Endothelial cell of umbilical vein (primary cell): ENCODE measurements at regions of chr17 and their contacts with region 1.

Region 1: DNA sequence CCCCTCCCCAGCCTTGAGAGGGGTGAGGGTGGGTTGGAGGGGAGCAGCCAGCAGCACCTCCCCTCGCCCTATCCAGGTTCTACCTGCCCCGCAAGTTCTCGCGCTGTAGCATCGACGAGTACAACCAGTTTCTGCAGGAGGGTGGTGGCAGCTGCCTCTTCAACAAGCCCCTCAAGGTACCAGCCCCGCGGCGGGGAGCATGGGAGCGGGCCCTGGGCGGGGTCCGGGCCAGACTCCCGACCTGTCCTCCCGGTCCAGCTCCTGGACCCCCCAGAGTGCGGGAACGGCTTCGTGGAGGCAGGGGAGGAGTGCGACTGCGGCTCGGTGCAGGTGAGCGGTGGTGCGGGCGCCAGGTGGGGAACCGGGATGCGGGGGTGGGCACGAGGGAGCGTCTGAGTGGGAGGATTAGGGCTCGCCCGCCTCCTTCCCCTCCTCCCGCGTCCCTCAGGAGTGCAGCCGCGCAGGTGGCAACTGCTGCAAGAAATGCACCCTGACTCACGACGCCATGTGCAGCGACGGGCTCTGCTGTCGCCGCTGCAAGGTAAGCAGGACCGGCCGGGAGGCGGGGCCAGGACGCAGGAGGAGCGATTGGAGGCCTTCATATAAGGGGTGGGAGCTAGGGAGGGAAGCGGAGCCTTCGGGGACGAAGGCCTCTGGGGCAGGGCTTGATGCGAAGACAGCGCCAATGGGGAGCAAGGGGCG is 16.5 kb downstream of the ADAM11 start:
- DNase-seq: peak; percentile 98
- H3K4me3 ChIP-seq: peak overlapping the region; percentile 9 to 51 (median 20)
- H3K27ac ChIP-seq: no peak overlapping the region
- H3K4me1 ChIP-seq: peaks cover 5% of the 10 kb centered on the region
- H3K27me3 ChIP-seq: no peaks in the 10 kb centered on the region
- CTCF ChIP-seq: no peak
- POLR2A ChIP-seq: no peak

Region 2: DNA sequence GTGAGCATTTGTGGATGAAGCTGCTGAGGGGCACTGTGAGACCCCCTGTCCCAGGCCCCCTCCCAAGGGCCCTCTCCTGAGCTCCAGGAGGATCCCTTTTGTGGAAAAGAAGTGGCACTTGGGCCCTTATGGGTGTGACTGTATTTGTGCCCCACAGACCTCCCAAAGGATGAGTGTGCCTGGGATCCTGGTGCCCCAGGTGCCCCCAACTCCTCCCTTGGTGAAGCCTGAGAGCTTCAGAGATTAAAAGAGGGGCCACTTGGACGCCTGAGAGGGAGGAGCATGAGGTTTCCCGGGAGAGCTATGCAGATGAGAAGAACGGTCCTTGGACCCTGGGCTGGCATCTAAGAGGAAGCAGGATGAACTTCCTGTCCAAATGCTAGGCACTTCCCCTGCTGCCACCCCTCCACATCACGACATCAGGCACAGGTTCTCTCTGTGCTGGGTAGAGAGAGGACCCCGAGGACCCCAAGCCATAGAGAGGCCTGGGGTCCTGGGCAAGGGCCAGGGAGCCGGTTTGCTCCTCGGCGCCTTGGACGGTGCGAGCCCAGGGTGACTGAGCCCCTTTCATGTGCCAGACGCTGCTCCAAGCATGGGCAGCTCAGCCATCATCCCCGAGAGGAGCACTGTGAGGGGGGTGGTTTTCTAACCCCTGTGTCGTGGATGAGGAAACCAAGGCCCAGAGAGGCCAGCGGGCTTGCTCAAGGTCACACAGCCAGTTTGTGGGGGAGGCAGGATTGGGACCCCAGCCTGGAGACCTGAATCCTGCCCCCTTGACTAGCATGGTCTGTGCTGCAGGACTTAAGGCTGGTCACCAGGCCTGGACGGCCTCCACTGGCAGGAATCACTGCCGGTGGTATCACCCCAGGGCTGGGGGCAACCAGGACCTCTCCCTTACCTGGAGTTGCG is 22.1 kb before region 1 on chr17:
- CTCF ChIA-PET with region 1: no interaction called
- POLR2A ChIA-PET with region 1: no interaction called
- dilution Hi-C with region 1: no loop called
- intact Hi-C with region 1: no loop called
- DNase-seq: no peak
- H3K4me3 ChIP-seq: no peak overlapping the region
- H3K27ac ChIP-seq: no peak overlapping the region
- H3K4me1 ChIP-seq: no peaks in the 10 kb centered on the region
- H3K27me3 ChIP-seq: no peaks in the 10 kb centered on the region
- CTCF ChIP-seq: no peak
- POLR2A ChIP-seq: no peak

Region 3: DNA sequence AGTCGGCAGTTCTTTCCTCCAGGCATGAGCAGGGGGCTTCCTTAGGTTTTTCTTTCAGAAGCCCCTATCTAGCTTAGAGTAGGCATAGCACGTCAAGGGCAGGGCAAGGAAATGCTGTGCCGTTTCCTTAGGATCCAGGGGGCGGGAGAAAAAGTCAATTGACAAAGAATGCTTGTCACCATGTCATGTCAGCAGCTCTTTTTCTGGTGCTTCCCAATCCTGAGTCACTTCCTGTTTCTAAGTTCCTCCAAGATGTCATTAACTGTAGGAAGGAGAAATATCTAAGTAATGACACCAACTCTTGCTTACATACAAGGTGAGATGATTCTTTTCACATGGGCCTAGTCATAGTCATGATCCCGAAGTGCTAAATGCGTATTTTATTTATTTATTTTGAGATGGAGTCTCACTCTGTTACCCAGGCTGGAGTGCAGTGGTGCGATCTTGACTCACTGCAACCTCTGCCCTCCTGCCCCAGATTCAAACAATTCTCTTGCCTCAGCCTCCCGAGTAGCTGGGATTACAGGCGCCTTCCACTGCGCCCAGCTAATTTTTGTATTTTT is 19.6 kb after region 1 on chr17:
- CTCF ChIA-PET with region 1: interaction called, 31 read pairs
- POLR2A ChIA-PET with region 1: no interaction called
- dilution Hi-C with region 1: no loop called
- intact Hi-C with region 1: no loop called
- DNase-seq: peak; percentile 87
- H3K4me3 ChIP-seq: no peak overlapping the region
- H3K27ac ChIP-seq: peak overlapping the region; percentile 93
- H3K4me1 ChIP-seq: peaks cover 22% of the 10 kb centered on the region
- H3K27me3 ChIP-seq: no peaks in the 10 kb centered on the region
- CTCF ChIP-seq: no peak
- POLR2A ChIP-seq: no peak

Region 4: GRCh38 chr17:44820631-44821212 is 45.4 kb after region 1 on chr17:
- CTCF ChIA-PET with region 1: interaction called, 36 read pairs
- POLR2A ChIA-PET with region 1: no interaction called
- dilution Hi-C with region 1: no loop called
- intact Hi-C with region 1: no loop called
- DNase-seq: peak; percentile 80
- H3K4me3 ChIP-seq: peak overlapping the region in 1 of 3 experiments; percentile 21
- H3K27ac ChIP-seq: peak overlapping the region; percentile 57
- H3K4me1 ChIP-seq: peaks cover 17% of the 10 kb centered on the region
- H3K27me3 ChIP-seq: no peaks in the 10 kb centered on the region
- CTCF ChIP-seq: no peak
- POLR2A ChIP-seq: no peak

Region 5: DNA sequence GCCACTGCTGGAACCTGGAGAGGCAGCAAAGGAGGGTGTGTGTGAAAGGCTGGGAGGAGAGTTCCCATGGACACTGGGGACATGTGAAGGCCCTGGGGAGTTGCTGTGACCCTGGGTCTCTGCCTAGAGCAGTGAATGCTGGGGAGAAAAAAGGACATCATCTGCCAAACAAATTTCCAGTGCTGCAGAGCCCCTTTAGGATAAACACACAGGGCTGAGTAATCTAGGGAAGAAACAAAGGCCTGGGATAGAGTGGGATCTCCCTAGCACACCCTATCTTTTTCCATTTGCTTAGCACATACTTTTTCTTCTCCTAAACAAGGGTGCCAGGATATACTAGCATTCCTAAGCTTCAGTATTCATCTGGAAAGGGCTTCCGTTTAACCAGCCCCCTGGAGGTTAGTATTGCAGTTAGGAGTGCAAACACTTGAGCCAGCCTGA is 69.1 kb after region 1 on chr17:
- CTCF ChIA-PET with region 1: interaction called, 23 read pairs
- POLR2A ChIA-PET with region 1: no interaction called
- dilution Hi-C with region 1: no loop called
- intact Hi-C with region 1: no loop called
- DNase-seq: peak; percentile 23
- H3K4me3 ChIP-seq: no peak overlapping the region
- H3K27ac ChIP-seq: no peak overlapping the region
- H3K4me1 ChIP-seq: no peaks in the 10 kb centered on the region
- H3K27me3 ChIP-seq: no peaks in the 10 kb centered on the region
- CTCF ChIP-seq: peak in 1 of 2 donors; percentile 2
- POLR2A ChIP-seq: no peak

Region 6: DNA sequence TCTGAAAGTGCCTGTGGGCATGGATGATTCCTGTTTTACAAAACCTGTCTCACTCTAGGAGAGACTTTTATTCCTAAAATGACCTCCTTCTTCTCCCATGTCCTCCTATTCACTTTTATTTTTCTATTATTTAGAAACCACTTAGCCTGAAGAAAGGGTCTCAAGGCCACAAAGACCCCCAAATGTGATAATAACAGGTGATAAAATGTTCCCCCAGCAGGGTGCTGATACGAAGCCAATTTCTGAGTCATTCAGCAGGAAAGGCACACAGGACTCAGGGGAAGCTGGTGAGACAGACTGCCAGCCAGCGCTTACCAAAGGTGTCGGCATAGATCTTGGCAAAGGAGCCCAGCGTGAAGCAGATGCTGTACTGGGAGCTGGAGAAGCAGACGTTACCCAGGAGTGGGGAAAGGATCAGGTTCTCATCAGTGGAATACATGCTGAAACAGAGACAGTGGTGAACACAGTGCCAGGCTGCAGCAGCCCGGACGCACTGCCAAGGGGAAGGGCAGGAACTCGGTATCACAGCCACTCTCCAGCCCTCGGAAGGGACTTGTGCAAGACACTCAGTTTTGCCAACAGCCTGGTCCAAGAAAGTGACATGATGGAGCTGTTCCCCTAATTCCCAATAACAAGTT is 97.0 kb after region 1 on chr17:
- CTCF ChIA-PET with region 1: interaction called, 368 read pairs
- POLR2A ChIA-PET with region 1: no interaction called
- dilution Hi-C with region 1: loop called (anchors 25 kb)
- intact Hi-C with region 1: no loop called
- DNase-seq: peak; percentile 40
- H3K4me3 ChIP-seq: no peak overlapping the region
- H3K27ac ChIP-seq: peak overlapping the region; percentile 21
- H3K4me1 ChIP-seq: peaks cover 20% of the 10 kb centered on the region
- H3K27me3 ChIP-seq: no peaks in the 10 kb centered on the region
- CTCF ChIP-seq: no peak
- POLR2A ChIP-seq: no peak

Region 7: DNA sequence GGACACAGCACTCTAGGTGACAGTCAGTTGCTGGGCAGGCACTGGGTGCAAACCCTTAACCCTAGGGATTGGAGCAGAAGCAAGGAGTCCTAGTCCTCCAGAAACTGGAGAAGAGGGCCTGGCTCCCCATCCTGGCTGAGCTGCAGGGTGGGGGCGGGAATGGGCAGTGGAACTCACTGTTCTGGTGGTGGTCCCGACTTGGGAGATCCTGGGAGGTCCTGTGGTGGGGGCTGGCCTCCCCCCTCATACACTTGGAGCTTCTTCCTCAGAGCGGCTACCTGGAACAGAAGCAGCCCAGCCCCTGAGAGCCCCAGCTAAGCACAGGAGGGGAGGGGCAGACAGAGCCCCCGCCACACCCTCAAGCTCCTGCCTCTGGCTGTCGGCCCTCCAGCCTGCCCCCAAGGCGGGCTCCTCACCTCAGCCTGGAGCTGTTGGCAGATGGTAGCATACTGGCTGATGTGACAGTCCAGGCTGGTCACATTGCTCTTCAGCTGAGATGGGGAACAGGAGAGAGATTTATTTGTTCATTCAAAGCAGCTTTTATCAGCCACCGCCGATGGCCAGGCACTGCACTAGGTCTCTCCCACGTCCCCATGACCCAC is 157.3 kb after region 1 on chr17:
- CTCF ChIA-PET with region 1: no interaction called
- POLR2A ChIA-PET with region 1: no interaction called
- dilution Hi-C with region 1: no loop called
- intact Hi-C with region 1: no loop called
- DNase-seq: no peak
- H3K4me3 ChIP-seq: no peak overlapping the region
- H3K27ac ChIP-seq: no peak overlapping the region
- H3K4me1 ChIP-seq: no peaks in the 10 kb centered on the region
- H3K27me3 ChIP-seq: no peaks in the 10 kb centered on the region
- CTCF ChIP-seq: no peak
- POLR2A ChIP-seq: no peak

Region 8: GRCh38 chr17:45021607-45022287 is 246.5 kb after region 1 on chr17:
- CTCF ChIA-PET with region 1: interaction called, 28 read pairs
- POLR2A ChIA-PET with region 1: interaction called, 3 read pairs
- dilution Hi-C with region 1: no loop called
- intact Hi-C with region 1: loop called (anchors 1 kb)
- DNase-seq: peak; percentile 38
- H3K4me3 ChIP-seq: peak overlapping the region in 1 of 3 experiments; percentile 30
- H3K27ac ChIP-seq: no peak overlapping the region
- H3K4me1 ChIP-seq: peaks cover 17% of the 10 kb centered on the region
- H3K27me3 ChIP-seq: no peaks in the 10 kb centered on the region
- CTCF ChIP-seq: peak; percentile 76 to 98
- POLR2A ChIP-seq: no peak